T-cell (primary cell): ENCODE measurements at regions of chr1 and their contacts with region 1.

Region 1: GRCh38 chr1:50893466-50893865 is 66.6 kb downstream of the FAF1 start:
- DNase-seq: no peak
- ATAC-seq: no peak
- H3K4me3 ChIP-seq: no peak overlapping the region
- H3K4me3 Mint-ChIP-seq: no peak overlapping the region
- H3K27ac ChIP-seq: no peak overlapping the region
- H3K27ac Mint-ChIP-seq: no peak overlapping the region
- H3K4me1 ChIP-seq: no peaks in the 10 kb centered on the region
- H3K4me1 Mint-ChIP-seq: peaks cover 18 to 40% (median 28%) of the 10 kb centered on the region in 3 donors
- H3K27me3 ChIP-seq: no peaks in the 10 kb centered on the region
- H3K27me3 Mint-ChIP-seq: no peaks in the 10 kb centered on the region

Region 2: GRCh38 chr1:50851034-50851433 is 42.4 kb before region 1 on chr1:
- CTCF ChIA-PET with region 1: no interaction called
- POLR2A ChIA-PET with region 1: interaction called in 1 of 2 experiments, 13 read pairs
- DNase-seq: no peak
- ATAC-seq: no peak
- H3K4me3 ChIP-seq: no peak overlapping the region
- H3K4me3 Mint-ChIP-seq: no peak overlapping the region
- H3K27ac ChIP-seq: no peak overlapping the region
- H3K27ac Mint-ChIP-seq: no peak overlapping the region
- H3K4me1 ChIP-seq: no peaks in the 10 kb centered on the region
- H3K4me1 Mint-ChIP-seq: peaks cover 27 to 36% (median 32%) of the 10 kb centered on the region in 3 donors
- H3K27me3 ChIP-seq: no peaks in the 10 kb centered on the region
- H3K27me3 Mint-ChIP-seq: no peaks in the 10 kb centered on the region

Region 3: GRCh38 chr1:51814513-51814912 is 921.0 kb after region 1 on chr1:
- CTCF ChIA-PET with region 1: no interaction called
- POLR2A ChIA-PET with region 1: no interaction called
- DNase-seq: no peak
- ATAC-seq: no peak
- H3K4me3 ChIP-seq: no peak overlapping the region
- H3K4me3 Mint-ChIP-seq: no peak overlapping the region
- H3K27ac ChIP-seq: no peak overlapping the region
- H3K27ac Mint-ChIP-seq: no peak overlapping the region
- H3K4me1 ChIP-seq: no peaks in the 10 kb centered on the region
- H3K4me1 Mint-ChIP-seq: no peaks in the 10 kb centered on the region
- H3K27me3 ChIP-seq: no peaks in the 10 kb centered on the region
- H3K27me3 Mint-ChIP-seq: no peaks in the 10 kb centered on the region